A673 (cell line): ENCODE measurements at regions of chr15 and their contacts with region 1.

Region 1: GRCh38 chr15:81111510-81112470 is 22.3 kb upstream of the CFAP161 start:
- DNase-seq: no peak
- H3K4me3 ChIP-seq: no peak overlapping the region
- H3K27ac ChIP-seq: no peak overlapping the region
- H3K4me1 ChIP-seq: no peaks in the 10 kb centered on the region
- H3K27me3 ChIP-seq: peaks cover 17% of the 10 kb centered on the region
- CTCF ChIP-seq: no peak

Region 2: DNA sequence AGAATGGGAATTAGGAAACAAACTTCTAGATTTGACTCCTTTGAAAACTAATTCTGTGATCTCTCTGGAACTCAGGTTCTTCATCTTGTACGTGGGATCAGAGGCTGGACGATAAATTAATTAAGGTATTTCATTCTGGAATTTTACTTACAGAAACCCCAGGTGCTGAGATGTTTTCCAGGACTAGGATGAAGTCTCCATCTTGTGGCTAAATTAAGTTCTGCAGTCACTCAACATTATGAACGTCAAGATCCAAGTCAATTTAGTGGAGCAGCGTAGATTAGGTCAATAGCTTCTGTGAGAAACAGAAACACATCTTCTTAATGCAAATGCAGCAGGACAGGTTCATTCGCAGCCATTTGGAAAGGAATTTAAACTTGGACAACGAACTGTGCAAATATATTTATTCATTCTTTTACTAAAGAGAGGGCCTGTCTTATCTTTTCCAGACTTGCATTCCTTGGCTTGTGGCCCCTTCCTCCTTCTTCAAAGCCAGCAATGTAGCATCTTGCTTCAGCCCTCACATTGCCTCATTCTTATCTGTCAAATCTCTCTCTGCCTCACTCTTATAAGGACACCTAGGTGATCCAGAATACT is 288.9 kb after region 1 on chr15:
- CTCF ChIA-PET with region 1: no interaction called
- POLR2A ChIA-PET with region 1: no interaction called
- intact Hi-C with region 1: loop called (anchors 5 kb)
- DNase-seq: peak; percentile 38
- H3K4me3 ChIP-seq: no peak overlapping the region
- H3K27ac ChIP-seq: no peak overlapping the region
- H3K4me1 ChIP-seq: no peaks in the 10 kb centered on the region
- H3K27me3 ChIP-seq: peaks cover 22% of the 10 kb centered on the region
- CTCF ChIP-seq: peak; percentile 72